ENCODE measurements at regions of chr14 and their contacts with region 1.

Region 1: GRCh38 chr14:77028384-77029231 is at the start of gene IRF2BPL:
- DNase-seq: peak; percentile 100
- ATAC-seq: peak; percentile 76
- total RNA-seq, gene IRF2BPL: 59.6 TPM

Region 2: DNA sequence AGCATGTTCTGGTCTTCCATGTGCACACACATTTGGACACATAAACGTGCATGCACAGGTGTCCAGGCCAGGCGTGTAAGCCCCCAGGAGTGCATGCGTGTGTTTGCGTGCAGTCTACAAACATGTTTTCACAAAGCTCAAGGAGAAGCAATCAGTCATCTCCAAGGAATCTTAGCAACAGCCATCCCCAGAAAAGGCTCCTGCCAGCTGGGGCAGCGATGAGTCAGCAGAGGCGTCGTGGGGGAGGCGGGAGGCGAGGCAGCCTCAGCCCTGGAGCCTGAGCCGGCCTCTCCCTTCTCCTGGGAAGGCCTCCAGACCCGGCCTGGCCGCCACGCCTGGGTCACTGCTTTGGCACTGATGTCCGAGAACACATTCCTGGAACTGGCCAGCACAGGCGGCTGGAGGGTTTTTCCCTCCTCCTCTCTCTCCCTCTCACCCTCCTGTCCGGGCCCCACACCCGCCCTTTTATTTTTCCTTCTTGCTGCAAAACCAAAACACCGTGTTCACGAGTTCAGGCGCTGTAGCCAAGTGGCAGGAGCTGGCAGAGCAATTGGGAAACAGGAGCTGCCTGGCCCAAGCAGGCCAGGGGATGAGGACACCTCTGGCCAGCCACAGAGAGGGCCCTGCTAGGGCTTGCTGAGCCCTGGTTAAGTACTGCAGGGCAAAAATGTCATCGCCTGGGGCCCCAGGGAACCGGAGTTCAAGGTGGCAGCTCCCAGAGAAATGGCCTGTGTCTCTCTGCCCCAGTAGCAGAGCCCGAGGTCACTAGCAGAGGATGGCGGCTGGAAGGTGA is 109.7 kb before region 1 on chr14:
- intact Hi-C with region 1: loop called (anchors 10 kb)
- DNase-seq: peak; percentile 96
- ATAC-seq: peak; percentile 95

Region 3: DNA sequence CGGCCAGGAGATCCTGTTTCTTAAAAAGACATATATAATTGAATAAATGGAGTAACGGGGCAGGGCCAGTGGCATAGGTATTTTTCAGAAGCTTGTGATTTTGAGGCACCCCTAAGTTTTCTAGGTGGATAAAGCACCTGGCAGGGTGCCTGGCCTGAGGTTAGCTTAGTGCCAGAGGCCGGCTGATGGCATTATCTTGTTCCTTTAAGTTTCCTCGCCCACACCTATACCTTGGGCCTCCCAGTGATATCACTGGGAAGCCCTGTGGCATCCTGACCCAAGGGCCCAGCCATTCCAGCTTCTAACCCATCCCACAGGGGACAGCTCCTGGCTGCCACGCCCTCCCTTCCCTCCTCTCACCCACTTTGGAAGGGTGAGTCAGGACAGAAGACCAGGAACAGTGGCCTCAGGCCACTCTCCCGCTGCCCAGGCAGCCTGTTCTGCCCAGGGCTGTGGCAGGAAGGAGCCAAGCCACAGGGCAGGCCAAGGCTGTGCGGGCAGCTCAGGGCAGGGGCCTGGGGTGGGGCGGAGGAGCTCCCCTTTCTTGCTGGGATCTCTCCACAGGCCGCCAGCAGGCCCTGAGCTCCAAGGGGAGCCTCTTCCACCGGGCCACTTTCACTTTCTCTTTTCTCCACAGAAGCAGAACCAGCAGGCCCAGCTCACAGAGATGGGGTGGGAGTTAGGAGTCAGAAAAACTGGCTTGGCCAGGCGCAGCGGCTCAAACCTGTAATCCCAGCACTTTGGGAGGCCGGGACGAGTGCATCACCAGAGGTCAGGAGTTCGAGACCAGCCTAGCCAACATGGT is 75.2 kb before region 1 on chr14:
- intact Hi-C with region 1: loop called (anchors 5 kb)
- DNase-seq: peak; percentile 75
- ATAC-seq: peak; percentile 76